Breast epithelium (tissue), 4 donors: ENCODE measurements at regions of chr19 and their contacts with region 1.

Region 1: DNA sequence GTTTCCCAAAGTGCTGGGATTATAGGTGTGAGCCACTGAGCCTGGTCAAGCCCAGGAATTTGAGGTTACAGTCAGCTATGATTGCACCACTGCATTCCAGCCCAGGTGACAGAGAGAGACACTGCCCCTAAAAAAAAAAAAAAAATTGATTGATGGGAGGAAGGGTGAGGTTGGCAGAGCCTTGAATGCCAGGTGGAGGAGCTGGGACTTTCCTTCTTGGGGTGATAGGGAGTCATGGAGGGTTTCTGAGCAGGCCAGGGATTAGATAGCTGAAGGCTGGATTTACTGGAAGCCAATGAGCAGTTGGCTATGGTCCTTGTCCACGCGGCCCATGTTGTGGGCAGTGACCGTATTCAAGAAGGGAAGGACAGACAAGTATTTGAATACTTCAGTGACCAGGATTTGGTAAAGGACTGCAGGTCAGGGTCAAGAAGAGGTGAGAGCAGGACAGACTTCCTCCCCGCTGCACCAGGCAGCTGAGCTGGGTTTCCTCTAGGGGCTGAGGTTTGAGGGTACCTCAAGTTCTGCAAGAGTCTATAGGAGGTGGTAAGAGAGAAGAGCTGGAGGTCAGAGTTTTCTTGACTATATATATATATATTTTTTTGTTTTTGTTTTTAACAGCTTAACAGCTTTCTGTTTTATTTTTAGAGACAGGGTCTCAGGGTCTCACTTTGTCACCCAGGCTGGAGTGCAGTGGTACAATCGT is 6.9 kb upstream of the ICAM4 start:
- DNase-seq: no peak
- H3K4me3 ChIP-seq: no peak overlapping the region
- H3K27ac ChIP-seq: no peak overlapping the region
- H3K4me1 ChIP-seq: no peaks in the 10 kb centered on the region
- H3K27me3 ChIP-seq: no peaks in the 10 kb centered on the region
- CTCF ChIP-seq: no peak
- POLR2A ChIP-seq: no peak

Region 2: DNA sequence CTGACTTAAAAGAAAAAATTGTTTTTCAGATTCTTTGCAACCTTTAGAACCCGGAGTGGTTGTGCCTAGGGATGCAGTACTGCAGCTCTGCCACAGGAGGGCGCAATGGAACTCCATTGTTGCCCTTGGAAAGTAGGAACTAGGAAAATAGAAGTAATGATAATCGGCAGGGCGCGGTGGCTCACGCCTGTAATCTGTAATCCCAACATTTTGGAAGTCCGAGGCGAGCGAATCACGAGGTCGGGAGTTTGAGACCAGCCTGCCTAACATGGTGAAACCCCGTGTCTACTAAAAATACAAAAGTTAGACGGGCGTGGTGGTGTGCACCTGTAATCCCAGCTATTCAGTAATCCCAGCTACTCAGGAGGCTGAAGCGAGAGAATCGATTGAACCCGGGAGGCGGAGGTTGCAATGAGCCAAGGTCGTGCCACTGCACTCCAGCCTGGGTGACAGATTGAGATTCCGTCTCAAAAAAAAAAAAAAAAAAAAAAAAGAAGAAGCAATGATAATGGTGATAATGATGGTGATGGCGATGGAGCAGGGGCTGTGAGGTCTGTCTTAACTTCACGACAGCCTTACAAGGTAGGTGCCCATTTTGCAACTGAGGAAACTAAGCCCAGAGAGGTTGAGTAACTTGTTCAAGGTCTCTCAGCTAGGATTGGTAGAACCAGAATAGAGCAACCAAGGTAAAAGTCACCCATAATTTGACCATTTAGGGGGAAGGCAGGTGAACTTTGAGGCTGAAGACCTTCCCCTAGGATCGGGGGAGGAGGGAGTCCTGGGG is 1663.9 kb before region 1 on chr19:
- intact Hi-C with region 1: no loop called
- DNase-seq: no peak
- H3K4me3 ChIP-seq: no peak overlapping the region
- H3K27ac ChIP-seq: no peak overlapping the region
- H3K4me1 ChIP-seq: no peaks in the 10 kb centered on the region
- H3K27me3 ChIP-seq: peaks cover 0 to 3% of the 10 kb centered on the region in 2 donors
- CTCF ChIP-seq: peak; percentile 44 to 63 (median 56)
- POLR2A ChIP-seq: no peak

Region 3: GRCh38 chr19:10251792-10252694 is 27.8 kb before region 1 on chr19 and contains the start of gene MRPL4:
- intact Hi-C with region 1: no loop called
- DNase-seq: peak; percentile 95 to 98
- H3K4me3 ChIP-seq: peak within 1 kb of the TSS; percentile 87 to 92 (median 88)
- H3K27ac ChIP-seq: peak within 1 kb of the TSS; percentile 85
- H3K4me1 ChIP-seq: no peaks in the 10 kb centered on the region
- H3K27me3 ChIP-seq: no peaks in the 10 kb centered on the region
- CTCF ChIP-seq: no peak
- POLR2A ChIP-seq: no peak
- total RNA-seq, gene MRPL4: 40.2 to 57.7 (median 52.7) TPM

Region 4: GRCh38 chr19:10327793-10328192 is 47.9 kb after region 1 on chr19:
- intact Hi-C with region 1: loop called (anchors 5 kb)
- DNase-seq: no peak
- H3K4me3 ChIP-seq: no peak overlapping the region
- H3K27ac ChIP-seq: no peak overlapping the region
- H3K4me1 ChIP-seq: peaks cover 5 to 6% of the 10 kb centered on the region in 2 donors
- H3K27me3 ChIP-seq: no peaks in the 10 kb centered on the region
- CTCF ChIP-seq: no peak
- POLR2A ChIP-seq: no peak